CD8-positive, alpha-beta T cell (primary cell): ENCODE measurements at regions of chr3 and their contacts with region 1.

Region 1: DNA sequence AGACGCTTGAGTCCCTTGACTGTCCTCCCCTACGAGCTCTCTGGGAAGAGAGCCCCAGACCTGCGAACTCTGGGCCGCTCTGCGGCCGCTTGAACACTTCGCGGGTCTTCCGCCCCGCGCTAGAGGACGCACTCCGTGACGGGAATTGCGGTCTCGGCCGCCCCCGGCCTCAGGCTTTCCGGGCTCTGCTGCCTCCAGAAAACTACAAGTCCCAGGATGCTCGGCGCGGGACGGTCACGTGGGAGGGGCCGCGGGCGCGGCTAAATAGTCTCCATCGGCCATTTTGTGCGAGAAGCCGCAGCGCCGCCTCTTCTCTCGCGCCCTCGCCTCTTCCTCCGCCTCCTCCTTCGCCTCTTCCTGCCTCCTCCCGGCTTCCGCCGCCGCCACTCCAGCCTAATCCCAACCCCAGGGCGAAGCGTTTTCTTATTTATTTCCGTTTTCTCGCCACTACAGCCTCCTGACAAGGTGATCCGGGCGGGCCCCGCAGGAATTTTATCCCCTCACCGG is at the start of gene EIF1B:
- DNase-seq: peak; percentile 97 to 99 (median 98)
- ATAC-seq: peak; percentile 85
- H3K4me3 ChIP-seq: peak within 1 kb of the TSS; percentile 95 to 96
- H3K4me3 Mint-ChIP-seq: peak within 1 kb of the TSS; percentile 98
- H3K27ac ChIP-seq: peak within 1 kb of the TSS; percentile 93 to 96
- H3K27ac Mint-ChIP-seq: peak within 1 kb of the TSS; percentile 99
- H3K4me1 ChIP-seq: peaks cover 18% of the 10 kb centered on the region
- H3K4me1 Mint-ChIP-seq: peaks cover 33% of the 10 kb centered on the region
- H3K27me3 ChIP-seq: no peaks in the 10 kb centered on the region
- H3K27me3 Mint-ChIP-seq: no peaks in the 10 kb centered on the region
- CTCF ChIP-seq: peak; percentile 67
- total RNA-seq, gene EIF1B: 133 to 135 TPM

Region 2: GRCh38 chr3:39383045-39383880 is 926.2 kb before region 1 on chr3 and contains the start of gene SLC25A38:
- CTCF ChIA-PET with region 1: no interaction called
- POLR2A ChIA-PET with region 1: interaction called, 3 read pairs
- intact Hi-C with region 1: loop called in 1 of 2 experiments (anchors 2 kb)
- DNase-seq: peak; percentile 58 to 93 (median 78)
- ATAC-seq: peak; percentile 79
- H3K4me3 ChIP-seq: peak within 1 kb of the TSS; percentile 81 to 98
- H3K4me3 Mint-ChIP-seq: peak within 1 kb of the TSS; percentile 99
- H3K27ac ChIP-seq: peak within 1 kb of the TSS; percentile 91 to 97
- H3K27ac Mint-ChIP-seq: peak within 1 kb of the TSS; percentile 98
- H3K4me1 ChIP-seq: peaks cover 43% of the 10 kb centered on the region
- H3K4me1 Mint-ChIP-seq: peaks cover 50% of the 10 kb centered on the region
- H3K27me3 ChIP-seq: no peaks in the 10 kb centered on the region
- H3K27me3 Mint-ChIP-seq: no peaks in the 10 kb centered on the region
- CTCF ChIP-seq: peak; percentile 39
- total RNA-seq, gene SLC25A38: 64.0 to 65.1 TPM

Region 3: DNA sequence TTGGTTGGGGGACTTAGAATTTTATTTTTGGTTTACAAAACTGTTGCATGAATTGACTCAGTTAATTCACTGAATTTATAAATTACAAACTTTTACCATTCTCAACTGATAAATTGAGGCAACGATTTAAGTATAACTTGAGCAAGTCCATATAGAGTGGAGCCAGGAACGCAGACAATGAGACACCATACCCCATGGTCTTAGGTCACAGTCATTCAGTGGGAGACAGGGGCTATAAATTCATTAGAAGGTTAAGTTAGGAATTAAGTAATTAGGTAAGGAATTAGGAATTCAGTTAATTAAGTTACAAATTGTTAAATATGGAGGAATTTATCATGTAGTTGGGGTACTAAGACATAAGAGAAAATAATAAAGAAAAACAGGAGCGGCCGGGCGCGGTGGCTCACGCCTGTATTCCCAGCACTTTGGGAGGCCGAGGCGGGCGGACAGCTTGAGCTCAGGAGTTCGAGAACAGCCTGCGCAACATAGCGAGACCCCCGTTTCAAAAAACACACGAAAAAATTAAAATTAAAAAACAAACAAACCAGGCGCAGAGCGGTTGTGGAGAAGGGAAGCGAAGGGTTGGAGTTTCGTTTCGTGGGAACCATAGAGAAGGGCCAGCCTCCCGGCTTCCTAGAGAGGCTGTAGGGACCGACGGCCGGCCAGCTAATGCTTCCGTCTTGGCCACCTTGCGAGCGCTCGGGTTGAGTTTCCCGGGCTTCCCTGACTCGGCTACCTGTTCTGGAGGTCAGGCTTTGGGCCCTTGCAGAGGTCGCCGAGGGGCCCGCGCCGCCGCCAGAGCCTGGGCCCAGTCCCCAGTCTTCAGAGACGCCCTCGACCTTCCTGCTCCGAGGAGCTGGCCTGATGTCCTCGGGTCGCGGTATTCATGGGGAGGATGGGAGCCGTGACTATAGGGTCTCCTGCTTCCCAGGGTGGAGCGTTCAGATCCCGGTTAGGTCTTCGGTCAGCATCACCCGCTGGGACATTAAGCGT is 167.3 kb after region 1 on chr3 and contains the start of gene ZNF619:
- CTCF ChIA-PET with region 1: no interaction called
- POLR2A ChIA-PET with region 1: no interaction called
- intact Hi-C with region 1: loop called in 1 of 2 experiments (anchors 1 kb)
- DNase-seq: peak; percentile 27 to 82 (median 57)
- ATAC-seq: peak; percentile 91
- H3K4me3 ChIP-seq: peak within 1 kb of the TSS; percentile 78 to 90
- H3K4me3 Mint-ChIP-seq: peak within 1 kb of the TSS; percentile 86
- H3K27ac ChIP-seq: peak within 1 kb of the TSS; percentile 65 to 79
- H3K27ac Mint-ChIP-seq: peak within 1 kb of the TSS; percentile 84
- H3K4me1 ChIP-seq: peaks cover 10% of the 10 kb centered on the region
- H3K4me1 Mint-ChIP-seq: peaks cover 25% of the 10 kb centered on the region
- H3K27me3 ChIP-seq: no peaks in the 10 kb centered on the region
- H3K27me3 Mint-ChIP-seq: no peaks in the 10 kb centered on the region
- CTCF ChIP-seq: no peak
- total RNA-seq, gene ZNF619: 2.2 to 4.1 TPM

Region 4: GRCh38 chr3:41117398-41117870 is 808.0 kb after region 1 on chr3:
- CTCF ChIA-PET with region 1: no interaction called
- POLR2A ChIA-PET with region 1: no interaction called
- intact Hi-C with region 1: loop called (anchors 5 kb)
- DNase-seq: peak; percentile 65 to 94 (median 83)
- ATAC-seq: peak; percentile 84
- H3K4me3 ChIP-seq: peak overlapping the region; percentile 18 to 27
- H3K4me3 Mint-ChIP-seq: peak overlapping the region; percentile 54
- H3K27ac ChIP-seq: peak overlapping the region; percentile 45 to 80
- H3K27ac Mint-ChIP-seq: peak overlapping the region; percentile 96
- H3K4me1 ChIP-seq: peaks cover 25% of the 10 kb centered on the region
- H3K4me1 Mint-ChIP-seq: peaks cover 33% of the 10 kb centered on the region
- H3K27me3 ChIP-seq: no peaks in the 10 kb centered on the region
- H3K27me3 Mint-ChIP-seq: no peaks in the 10 kb centered on the region
- CTCF ChIP-seq: no peak

Region 5: DNA sequence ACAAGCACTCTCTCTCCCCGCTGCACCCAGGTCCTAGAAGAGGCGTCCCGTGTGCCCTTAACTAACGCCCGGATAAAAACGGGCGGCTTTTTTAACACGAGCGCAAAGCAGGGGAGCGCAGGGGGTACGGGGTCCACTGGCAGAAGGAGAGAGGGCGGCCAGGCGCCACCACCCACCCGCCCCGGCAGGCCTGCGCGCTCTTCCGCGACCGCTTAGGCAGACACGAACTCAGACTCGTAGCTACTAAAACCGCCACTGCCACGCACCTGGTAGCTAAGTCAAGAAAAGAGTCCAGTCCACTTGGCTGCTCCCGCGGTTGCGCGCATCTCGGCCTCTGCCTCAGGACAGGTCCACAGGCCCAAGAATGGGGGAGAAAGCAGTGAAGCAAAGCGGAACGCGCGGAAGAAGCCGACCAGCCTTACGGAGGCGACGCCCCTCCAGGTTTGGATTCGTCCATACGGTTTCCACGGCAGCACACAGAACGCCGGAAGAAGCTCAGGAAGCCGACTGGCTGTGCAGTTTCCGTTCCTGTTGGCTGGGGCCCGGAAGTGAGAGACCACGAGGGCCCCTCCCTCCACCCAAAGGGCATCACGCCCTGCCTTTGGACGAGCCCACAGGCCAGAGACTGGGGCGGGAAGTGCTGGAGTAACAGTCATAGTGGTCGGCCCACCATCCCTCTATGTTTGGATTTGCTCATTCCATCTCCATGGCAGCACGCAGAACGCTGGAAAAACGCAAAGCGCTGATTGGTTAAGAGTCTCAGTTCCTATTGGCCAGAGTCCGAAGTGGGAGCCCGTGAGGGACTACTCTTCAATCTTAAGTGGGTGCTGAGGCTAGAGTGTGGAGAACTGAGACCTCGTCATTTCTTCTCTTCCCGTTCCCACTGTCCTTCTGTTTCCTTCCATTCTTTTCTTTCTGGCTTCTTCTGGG is 1652.5 kb after region 1 on chr3 and contains the start of gene ULK4:
- CTCF ChIA-PET with region 1: no interaction called
- POLR2A ChIA-PET with region 1: no interaction called
- intact Hi-C with region 1: loop called (anchors 1 to 2 kb)
- DNase-seq: peak; percentile 89 to 99 (median 95)
- ATAC-seq: peak; percentile 84
- H3K4me3 ChIP-seq: peak within 1 kb of the TSS; percentile 84 to 99
- H3K4me3 Mint-ChIP-seq: peak within 1 kb of the TSS; percentile 100
- H3K27ac ChIP-seq: peak within 1 kb of the TSS; percentile 85 to 96
- H3K27ac Mint-ChIP-seq: peak within 1 kb of the TSS; percentile 99
- H3K4me1 ChIP-seq: peaks cover 15% of the 10 kb centered on the region
- H3K4me1 Mint-ChIP-seq: peaks cover 24% of the 10 kb centered on the region
- H3K27me3 ChIP-seq: no peaks in the 10 kb centered on the region
- H3K27me3 Mint-ChIP-seq: no peaks in the 10 kb centered on the region
- CTCF ChIP-seq: no peak
- total RNA-seq, gene ULK4: 11.9 to 15.1 TPM